ENCODE measurements at regions of chr9 and their contacts with region 1.

Region 1: GRCh38 chr9:4740638-4741364 is at the start of gene AK3:
- DNase-seq: peak; percentile 91 to 94
- ATAC-seq: peak; percentile 95
- H3K4me3 ChIP-seq: peak within 1 kb of the TSS; percentile 45 to 60
- H3K27ac ChIP-seq: peak within 1 kb of the TSS; percentile 24 to 73
- H3K4me1 ChIP-seq: peaks cover 0 to 2% of the 10 kb centered on the region in 2 donors
- H3K27me3 ChIP-seq: no peaks in the 10 kb centered on the region
- total RNA-seq, gene AK3: 39.4 to 51.4 TPM

Region 2: DNA sequence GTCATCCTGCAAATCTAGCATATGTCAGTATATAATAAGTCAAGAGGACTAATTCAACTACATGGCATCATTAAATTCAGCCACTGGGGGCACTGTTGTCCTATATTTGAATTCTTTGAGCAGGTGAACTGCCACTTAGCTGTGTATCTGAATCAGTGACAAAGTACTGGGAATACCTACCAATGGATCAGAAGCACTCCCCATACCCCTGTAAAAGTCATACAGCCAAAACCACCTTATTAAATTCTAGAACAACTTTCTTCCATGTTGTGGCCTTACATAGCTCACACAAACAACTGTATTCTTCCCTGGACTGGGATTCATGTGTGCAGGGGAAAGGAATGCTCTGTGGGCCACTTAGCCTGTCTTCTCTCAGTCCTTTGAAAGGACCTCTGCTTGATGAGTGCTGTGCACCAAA is 136.1 kb before region 1 on chr9:
- intact Hi-C with region 1: loop called in 1 of 2 experiments (anchors 10 kb)
- DNase-seq: no peak
- ATAC-seq: peak; percentile 80
- H3K4me3 ChIP-seq: no peak overlapping the region
- H3K27ac ChIP-seq: no peak overlapping the region
- H3K4me1 ChIP-seq: no peaks in the 10 kb centered on the region
- H3K27me3 ChIP-seq: no peaks in the 10 kb centered on the region

Region 3: GRCh38 chr9:4679268-4680172 is 61.3 kb before region 1 on chr9 and contains the start of gene CDC37L1:
- intact Hi-C with region 1: loop called in 1 of 2 experiments (anchors 10 kb)
- DNase-seq: peak; percentile 99 to 100
- ATAC-seq: peak; percentile 99
- H3K4me3 ChIP-seq: peak within 1 kb of the TSS; percentile 93 to 94
- H3K27ac ChIP-seq: peak within 1 kb of the TSS; percentile 91 to 98
- H3K4me1 ChIP-seq: no peaks in the 10 kb centered on the region
- H3K27me3 ChIP-seq: no peaks in the 10 kb centered on the region
- total RNA-seq, gene CDC37L1: 19.5 to 26.3 TPM

Region 4: GRCh38 chr9:4894076-4894475 is 153.3 kb after region 1 on chr9:
- intact Hi-C with region 1: no loop called
- DNase-seq: no peak
- ATAC-seq: no peak
- H3K4me3 ChIP-seq: no peak overlapping the region
- H3K27ac ChIP-seq: no peak overlapping the region
- H3K4me1 ChIP-seq: peaks cover 0 to 2% of the 10 kb centered on the region in 2 donors
- H3K27me3 ChIP-seq: no peaks in the 10 kb centered on the region